ENCODE measurements at regions of chr10 and their contacts with region 1.

Region 1: GRCh38 chr10:7417103-7417623 is 6.3 kb upstream of the SFMBT2 start:
- DNase-seq: no peak
- H3K4me3 ChIP-seq: peak overlapping the region in 2 of 59 donors; percentile 13 to 17
- H3K27ac ChIP-seq: peak overlapping the region in 19 of 59 donors; percentile 12 to 63 (median 38)
- H3K27me3 ChIP-seq: peaks cover 0 to 11% (median 0%) of the 10 kb centered on the region in 45 donors
- CTCF ChIP-seq: peak; percentile 33 to 92 (median 74)

Region 2: DNA sequence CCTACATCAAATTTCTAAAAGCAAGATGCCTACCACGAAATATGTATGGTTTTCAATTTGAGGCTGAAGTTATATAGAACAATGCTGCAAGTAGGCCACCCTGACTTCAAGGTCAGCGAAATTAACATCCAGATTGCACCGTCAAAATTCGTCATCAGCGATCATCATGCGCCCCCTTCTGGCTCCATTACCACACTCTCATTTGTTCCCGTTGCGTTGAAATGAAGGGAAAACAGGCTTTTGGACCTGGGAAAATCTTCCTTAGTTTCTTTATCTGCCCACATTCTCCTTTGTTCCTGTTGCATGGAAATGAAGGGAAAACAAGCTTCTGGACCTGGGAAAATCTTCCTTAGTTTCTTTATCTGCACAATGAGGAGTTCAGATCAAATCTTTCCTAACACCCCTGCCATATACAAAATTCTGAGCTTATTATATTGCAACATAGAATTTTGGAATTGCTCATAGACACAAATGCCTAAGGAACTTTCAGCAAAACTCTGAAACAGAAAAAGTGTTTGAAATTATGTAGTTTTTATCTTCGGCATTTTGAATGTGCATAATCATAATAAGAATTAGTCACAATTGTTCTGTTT is 738.9 kb before region 1 on chr10:
- intact Hi-C with region 1: loop called (anchors 5 kb)
- DNase-seq: peak in 7 of 10 donors; percentile 8 to 56 (median 40)
- H3K4me3 ChIP-seq: peak overlapping the region in 1 of 59 donors; percentile 10
- H3K27ac ChIP-seq: no peak overlapping the region
- H3K27me3 ChIP-seq: peaks cover 0 to 5% (median 0%) of the 10 kb centered on the region in 45 donors
- CTCF ChIP-seq: peak; percentile 37 to 82 (median 66)

Region 3: GRCh38 chr10:6786579-6787031 is 630.6 kb before region 1 on chr10:
- intact Hi-C with region 1: loop called (anchors 2 to 5 kb)
- DNase-seq: peak in 9 of 10 donors; percentile 12 to 64 (median 49)
- H3K4me3 ChIP-seq: peak overlapping the region in 21 of 59 donors; percentile 1 to 40 (median 17)
- H3K27ac ChIP-seq: peak overlapping the region in 21 of 59 donors; percentile 8 to 85 (median 46)
- H3K27me3 ChIP-seq: peaks cover 0 to 14% (median 0%) of the 10 kb centered on the region in 45 donors
- CTCF ChIP-seq: peak; percentile 30 to 82 (median 61)

Region 4: GRCh38 chr10:7773845-7774801 is 357.0 kb after region 1 on chr10:
- intact Hi-C with region 1: no loop called
- DNase-seq: peak in 1 of 10 donors; percentile 83
- H3K4me3 ChIP-seq: no peak overlapping the region
- H3K27ac ChIP-seq: peak overlapping the region in 1 of 59 donors; percentile 46
- H3K27me3 ChIP-seq: no peaks in the 10 kb centered on the region
- CTCF ChIP-seq: no peak